ENCODE measurements at regions of chr19 and their contacts with region 1.

Region 1: GRCh38 chr19:17766543-17767131 is 15.4 kb downstream of the FCHO1 start:
- DNase-seq: peak; percentile 70
- CTCF ChIP-seq: peak; percentile 75

Region 2: DNA sequence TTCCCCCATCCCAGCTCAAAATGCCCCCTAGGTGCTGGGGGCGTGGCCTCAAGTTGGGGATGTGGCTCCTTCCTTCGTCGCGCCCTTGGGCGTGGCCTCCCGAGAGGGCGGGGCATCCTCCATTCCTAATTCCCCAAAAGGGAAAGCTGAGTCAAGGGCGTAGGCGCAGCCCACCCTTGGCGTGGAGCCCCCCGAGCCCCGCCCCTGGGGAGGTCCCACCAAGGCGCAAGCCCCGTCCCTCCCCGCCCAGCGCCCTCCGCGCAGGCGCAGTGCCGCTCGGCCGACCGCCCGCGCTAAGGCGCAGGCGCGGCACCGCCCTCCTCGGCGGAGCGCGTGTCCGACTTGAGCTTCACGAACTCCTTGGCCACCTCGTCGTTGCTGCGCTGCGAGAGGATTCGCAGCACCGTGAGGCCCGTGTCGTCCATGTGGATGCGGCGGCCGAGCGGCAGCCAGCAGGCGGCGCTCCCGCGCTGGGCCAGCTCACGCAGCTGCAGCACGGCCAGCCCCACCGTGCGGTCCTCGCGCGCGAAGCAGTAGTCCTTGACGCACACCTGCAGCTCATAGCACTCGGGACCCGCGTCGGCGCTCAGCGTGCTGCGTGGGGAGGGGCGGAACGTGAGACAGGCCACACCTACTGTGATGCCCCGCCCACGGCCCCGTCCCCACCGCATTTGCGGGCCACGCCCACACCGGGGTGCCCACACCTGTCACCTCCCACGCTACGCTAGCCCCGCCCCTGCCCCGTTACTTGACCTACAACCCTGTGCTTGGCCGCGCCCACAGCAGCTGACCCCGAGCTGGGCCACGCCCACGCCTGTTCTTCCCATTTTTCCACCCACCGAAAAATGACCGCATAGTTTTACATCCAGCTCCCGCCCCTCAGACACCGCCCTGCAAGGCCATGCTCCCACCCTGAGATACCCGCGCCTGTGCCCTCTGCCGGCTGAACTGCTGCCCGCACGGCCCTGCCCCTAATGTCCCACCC is 160.6 kb before region 1 on chr19:
- CTCF ChIA-PET with region 1: interaction called, 13 read pairs
- POLR2A ChIA-PET with region 1: interaction called, 3 read pairs
- DNase-seq: peak; percentile 96
- CTCF ChIP-seq: peak; percentile 42

Region 3: GRCh38 chr19:17703824-17704463 is 62.7 kb before region 1 on chr19:
- CTCF ChIA-PET with region 1: interaction called, 78 read pairs
- POLR2A ChIA-PET with region 1: no interaction called
- DNase-seq: peak; percentile 84
- CTCF ChIP-seq: peak; percentile 86

Region 4: DNA sequence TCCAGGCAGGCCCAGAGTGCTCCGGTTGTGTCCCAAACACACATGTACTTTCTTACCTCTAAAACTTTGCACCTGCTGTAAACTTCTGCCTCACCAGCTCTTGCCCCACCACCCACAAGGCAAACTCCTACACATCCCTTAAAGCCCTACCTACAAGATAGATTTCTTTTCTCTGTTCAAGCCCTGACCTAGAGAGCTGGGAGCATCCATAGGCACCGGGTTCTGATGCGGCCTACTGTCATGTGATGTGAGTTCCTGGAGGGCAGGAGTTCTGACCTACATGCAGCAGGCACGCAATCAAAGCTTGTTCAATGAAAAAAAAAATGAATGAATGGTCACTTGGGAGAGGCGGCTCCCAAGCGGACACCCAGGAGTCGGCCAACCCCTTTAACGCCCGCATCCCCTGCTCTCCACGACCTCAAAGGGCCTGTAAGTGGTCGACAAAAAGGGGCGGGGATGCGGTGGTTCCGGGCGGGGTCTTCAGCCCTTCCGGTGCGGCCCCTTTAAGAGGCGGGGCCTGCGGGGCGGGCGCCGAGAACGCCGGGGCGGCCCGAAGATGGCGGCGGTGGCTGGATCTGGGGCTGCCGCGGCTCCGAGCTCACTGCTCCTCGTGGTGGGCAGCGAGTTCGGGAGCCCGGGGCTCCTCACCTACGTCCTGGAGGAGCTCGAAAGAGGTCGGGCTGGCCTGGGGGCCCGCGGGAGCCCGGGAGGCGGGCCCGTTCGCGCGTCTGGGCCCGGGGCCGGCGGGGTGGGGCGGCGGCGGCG is 47.5 kb before region 1 on chr19 and contains the start of gene MAP1S:
- CTCF ChIA-PET with region 1: interaction called, 29 read pairs
- POLR2A ChIA-PET with region 1: no interaction called
- DNase-seq: peak; percentile 92
- CTCF ChIP-seq: no peak

Region 5: GRCh38 chr19:17725422-17726078 is 41.1 kb before region 1 on chr19:
- CTCF ChIA-PET with region 1: interaction called, 29 read pairs
- POLR2A ChIA-PET with region 1: no interaction called
- DNase-seq: no peak
- CTCF ChIP-seq: peak; percentile 67

Region 6: GRCh38 chr19:17784201-17785008 is 17.8 kb after region 1 on chr19:
- CTCF ChIA-PET with region 1: interaction called, 23 read pairs
- POLR2A ChIA-PET with region 1: interaction called, 4 read pairs
- DNase-seq: peak; percentile 85
- CTCF ChIP-seq: peak; percentile 76

Region 7: DNA sequence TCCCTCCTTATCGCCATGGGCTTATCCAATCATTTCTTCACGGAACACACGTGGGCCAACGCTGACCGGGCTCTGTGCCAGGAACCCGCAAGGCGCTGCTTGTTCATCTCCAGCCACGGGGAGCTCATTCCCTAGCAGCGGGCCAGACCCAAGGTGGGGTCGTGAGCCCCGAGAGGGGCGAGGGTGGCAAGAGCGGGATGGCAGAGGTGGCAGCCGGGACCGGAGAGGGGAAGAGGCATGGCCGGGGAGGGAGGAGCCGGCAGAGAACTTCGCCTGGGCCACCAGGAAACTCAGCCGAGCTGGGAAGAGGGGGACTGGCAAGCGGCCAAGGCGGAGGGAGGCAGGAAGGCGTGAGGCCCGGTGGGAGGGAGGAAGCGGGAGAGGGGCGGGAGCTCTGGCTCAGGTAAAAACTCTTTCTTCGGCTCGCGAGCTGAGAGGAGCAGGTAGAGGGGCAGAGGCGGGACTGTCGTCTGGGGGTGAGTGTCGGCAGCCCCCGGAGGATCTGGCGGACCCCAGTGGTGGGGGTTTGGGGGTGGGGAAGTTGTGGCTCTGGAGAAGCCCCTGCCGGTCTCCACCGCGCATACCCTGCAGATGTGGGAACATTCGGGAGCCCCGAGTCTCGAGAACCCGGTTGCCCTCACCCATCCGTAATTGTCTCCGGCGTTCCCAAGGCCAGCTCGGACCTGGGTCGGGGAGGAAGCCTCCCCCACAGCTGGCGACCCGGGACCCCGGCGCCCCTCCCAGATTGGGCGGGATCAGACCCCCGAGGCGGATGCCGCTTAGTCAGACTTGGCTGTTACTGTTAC is 28.3 kb after region 1 on chr19 and contains the start of gene B3GNT3:
- CTCF ChIA-PET with region 1: no interaction called
- POLR2A ChIA-PET with region 1: no interaction called
- DNase-seq: no peak
- CTCF ChIP-seq: no peak